Activated T-helper 1 cell treated with anti-CD3 and anti-CD28 coated beads, Interleukin-12 subunit alpha, Interleukin-12 subunit beta, Interleukin-2, Interleukin-4 antibody, amounts not matched to agents 30 ng/mL and 10 ng/mL and 1 ng/mL, durations not matched to agents 14 hours and 24 hours and 36 hours (primary cell): ENCODE measurements at regions of chr1 and their contacts with region 1.

Region 1: DNA sequence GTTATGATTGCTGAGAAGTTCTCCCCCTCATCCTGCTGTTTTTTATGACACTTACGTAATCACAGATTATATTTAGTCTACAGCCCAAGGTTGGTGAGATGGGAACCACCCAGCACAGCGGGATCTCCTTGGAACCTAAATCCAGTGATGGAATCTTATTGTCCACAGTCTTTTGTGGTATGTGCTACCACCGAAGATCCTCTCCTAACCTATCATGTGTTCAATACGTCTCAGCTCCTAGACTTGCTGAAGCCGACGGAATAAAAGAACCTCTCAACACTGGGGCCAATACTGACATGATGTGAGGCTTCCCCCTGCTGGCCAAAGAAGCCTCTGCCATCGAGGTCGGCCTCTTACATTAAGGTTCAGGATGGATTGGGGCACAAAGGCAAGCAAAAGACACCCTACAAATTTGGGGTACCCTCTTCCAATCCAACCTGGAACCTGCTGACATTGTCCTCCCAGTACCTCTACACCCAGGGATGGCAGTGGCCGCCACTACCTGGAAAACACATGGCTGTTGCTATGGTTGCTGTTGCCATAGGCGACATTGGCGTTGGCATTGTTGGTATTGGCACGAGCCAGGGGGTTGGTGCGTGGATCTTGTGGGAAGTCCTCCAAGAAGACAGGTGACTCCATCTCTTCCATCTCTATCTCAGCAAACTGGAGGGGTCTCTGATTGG is 19.4 kb upstream of the KIF21B start:
- DNase-seq: peak; percentile 53
- H3K4me3 Mint-ChIP-seq: no peak overlapping the region
- H3K27ac Mint-ChIP-seq: no peak overlapping the region
- H3K4me1 Mint-ChIP-seq: peaks cover 5% of the 10 kb centered on the region
- H3K27me3 Mint-ChIP-seq: peaks cover 14% of the 10 kb centered on the region

Region 2: GRCh38 chr1:200971955-200972711 is 70.8 kb before region 1 on chr1:
- intact Hi-C with region 1: loop called (anchors 1 kb)
- DNase-seq: peak; percentile 26
- H3K4me3 Mint-ChIP-seq: no peak overlapping the region
- H3K27ac Mint-ChIP-seq: no peak overlapping the region
- H3K4me1 Mint-ChIP-seq: peaks cover 4% of the 10 kb centered on the region
- H3K27me3 Mint-ChIP-seq: no peaks in the 10 kb centered on the region

Region 3: DNA sequence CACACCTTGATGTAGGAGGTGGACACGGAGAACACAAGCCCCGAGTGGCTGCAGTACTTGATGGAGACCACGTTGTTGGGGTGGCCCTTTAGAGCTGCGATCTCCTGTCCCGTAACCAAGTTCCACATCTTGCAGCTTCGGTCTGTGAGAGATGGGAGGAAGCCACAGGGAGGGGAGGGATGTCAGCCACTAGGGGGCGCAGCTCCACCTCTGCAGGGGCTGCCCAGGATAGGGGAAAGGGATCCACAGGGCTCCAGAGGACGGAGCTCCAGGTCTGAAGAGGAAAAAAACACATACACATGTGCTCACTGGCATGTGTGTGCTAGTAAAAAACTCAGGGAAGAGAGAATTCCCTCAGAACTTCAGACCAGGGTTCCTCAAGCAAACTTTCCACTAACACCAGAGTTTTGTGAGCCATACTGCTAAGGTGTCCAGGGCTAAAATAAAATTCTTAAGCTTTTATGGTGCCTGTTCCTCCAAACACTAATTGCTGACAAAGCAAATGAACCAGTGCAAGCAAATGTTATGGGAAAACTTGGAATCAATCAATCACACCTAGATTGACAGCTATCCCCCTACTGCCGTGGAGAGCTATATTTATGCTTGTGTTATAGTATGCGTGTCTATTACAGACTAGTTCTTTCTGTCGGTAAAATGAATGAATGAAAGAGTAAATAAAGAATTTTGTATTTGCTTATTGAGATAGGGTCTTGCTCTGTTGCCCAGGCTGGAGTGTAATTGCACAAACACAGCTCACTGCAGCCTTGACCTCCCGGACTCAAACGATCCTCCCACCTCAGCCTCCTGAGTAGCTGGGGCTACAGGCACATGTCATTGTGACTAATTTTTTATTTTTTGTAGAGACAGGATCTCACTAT is 63.1 kb before region 1 on chr1:
- intact Hi-C with region 1: loop called (anchors 1 kb)
- DNase-seq: peak; percentile 26
- H3K4me3 Mint-ChIP-seq: no peak overlapping the region
- H3K27ac Mint-ChIP-seq: no peak overlapping the region
- H3K4me1 Mint-ChIP-seq: no peaks in the 10 kb centered on the region
- H3K27me3 Mint-ChIP-seq: no peaks in the 10 kb centered on the region